Caco-2 (cell line): ENCODE measurements at regions of chr1 and their contacts with region 1.

Region 1: GRCh38 chr1:162561037-162561616 is 395 bp upstream of the UAP1 start:
- DNase-seq: peak; percentile 97 to 98
- H3K4me3 ChIP-seq: peak overlapping the region; percentile 98
- H3K4me3 Mint-ChIP-seq: peak overlapping the region; percentile 96
- H3K27ac Mint-ChIP-seq: peak overlapping the region; percentile 96
- H3K4me1 ChIP-seq: peaks cover 16% of the 10 kb centered on the region
- H3K4me1 Mint-ChIP-seq: peaks cover 15% of the 10 kb centered on the region
- H3K27me3 ChIP-seq: no peaks in the 10 kb centered on the region
- H3K27me3 Mint-ChIP-seq: no peaks in the 10 kb centered on the region
- CTCF ChIP-seq: no peak

Region 2: DNA sequence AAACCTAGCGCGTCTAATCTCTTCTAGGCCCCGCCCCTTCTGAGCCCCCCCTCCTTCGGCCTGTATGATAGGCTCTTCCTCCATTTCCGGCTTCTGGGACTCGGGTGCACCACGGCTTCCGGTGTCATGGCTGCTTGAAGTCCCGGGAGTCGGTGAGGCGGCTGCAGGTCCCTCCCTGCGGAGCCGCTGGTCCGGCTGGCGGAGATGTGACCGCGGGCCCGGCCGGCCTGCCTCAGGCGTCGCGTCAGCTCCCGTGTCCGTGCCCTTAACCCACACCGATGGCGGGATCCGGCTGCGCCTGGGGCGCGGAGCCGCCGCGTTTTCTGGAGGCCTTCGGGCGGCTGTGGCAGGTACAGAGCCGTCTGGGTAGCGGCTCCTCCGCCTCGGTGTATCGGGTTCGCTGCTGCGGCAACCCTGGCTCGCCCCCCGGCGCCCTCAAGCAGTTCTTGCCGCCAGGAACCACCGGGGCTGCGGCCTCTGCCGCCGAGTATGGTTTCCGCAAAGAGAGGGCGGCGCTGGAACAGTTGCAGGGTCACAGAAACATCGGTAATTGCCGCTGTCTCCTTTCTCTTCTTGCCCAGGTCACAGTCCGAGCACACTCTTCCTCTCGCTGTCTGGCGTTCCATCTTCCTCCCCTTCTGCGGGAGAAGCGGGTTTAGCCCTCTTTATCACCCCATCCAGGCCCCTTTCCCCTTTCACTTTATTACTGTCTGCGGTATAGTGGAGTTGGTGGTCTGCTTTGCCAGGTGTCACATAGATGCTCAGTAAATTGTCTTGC is 63.2 kb before region 1 on chr1 and contains the start of gene UHMK1:
- CTCF ChIA-PET with region 1: no interaction called
- POLR2A ChIA-PET with region 1: no interaction called
- intact Hi-C with region 1: loop called (anchors 2 kb)
- DNase-seq: peak; percentile 85 to 90
- H3K4me3 ChIP-seq: peak within 1 kb of the TSS; percentile 80
- H3K4me3 Mint-ChIP-seq: peak within 1 kb of the TSS; percentile 93
- H3K27ac Mint-ChIP-seq: peak within 1 kb of the TSS; percentile 94
- H3K4me1 ChIP-seq: 0 out of 2 replicates have a peak, but pooled peaks cover 3% of the 10 kb centered on the region
- H3K4me1 Mint-ChIP-seq: no peaks in the 10 kb centered on the region
- H3K27me3 ChIP-seq: no peaks in the 10 kb centered on the region
- H3K27me3 Mint-ChIP-seq: no peaks in the 10 kb centered on the region
- CTCF ChIP-seq: no peak
- total RNA-seq, gene UHMK1: 23.4 and 24.9 TPM in 2 replicates

Region 3: GRCh38 chr1:162571696-162572095 is 10.6 kb after region 1 on chr1:
- CTCF ChIA-PET with region 1: no interaction called
- POLR2A ChIA-PET with region 1: no interaction called
- intact Hi-C with region 1: loop called (anchors 1 kb)
- DNase-seq: no peak
- H3K4me3 ChIP-seq: no peak overlapping the region
- H3K4me3 Mint-ChIP-seq: no peak overlapping the region
- H3K27ac Mint-ChIP-seq: no peak overlapping the region
- H3K4me1 ChIP-seq: 0 out of 2 replicates have a peak, but pooled peaks cover 5% of the 10 kb centered on the region
- H3K4me1 Mint-ChIP-seq: peaks cover 7% of the 10 kb centered on the region
- H3K27me3 ChIP-seq: no peaks in the 10 kb centered on the region
- H3K27me3 Mint-ChIP-seq: no peaks in the 10 kb centered on the region
- CTCF ChIP-seq: no peak

Region 4: GRCh38 chr1:162605225-162605927 is 44.2 kb after region 1 on chr1:
- CTCF ChIA-PET with region 1: no interaction called
- POLR2A ChIA-PET with region 1: no interaction called
- intact Hi-C with region 1: no loop called
- DNase-seq: no peak
- H3K4me3 ChIP-seq: no peak overlapping the region
- H3K4me3 Mint-ChIP-seq: no peak overlapping the region
- H3K27ac Mint-ChIP-seq: no peak overlapping the region
- H3K4me1 ChIP-seq: no peaks in the 10 kb centered on the region
- H3K4me1 Mint-ChIP-seq: no peaks in the 10 kb centered on the region
- H3K27me3 ChIP-seq: no peaks in the 10 kb centered on the region
- H3K27me3 Mint-ChIP-seq: no peaks in the 10 kb centered on the region
- CTCF ChIP-seq: no peak